Sigmoid colon (tissue), 7 donors: ENCODE measurements at regions of chr6 and their contacts with region 1.

Region 1: GRCh38 chr6:31834434-31835198 is 7.1 kb downstream of the HSPA1B start:
- DNase-seq: peak; percentile 93
- H3K4me3 ChIP-seq: peak overlapping the region; percentile 63 to 85 (median 74)
- H3K27ac ChIP-seq: peak overlapping the region; percentile 90 to 96 (median 94)
- H3K4me1 ChIP-seq: peaks cover 0 to 67% (median 59%) of the 10 kb centered on the region in 4 donors
- H3K27me3 ChIP-seq: no peaks in the 10 kb centered on the region
- CTCF ChIP-seq: no peak
- EP300 ChIP-seq: peak in 2 of 4 donors; percentile 55 to 59
- POLR2A ChIP-seq: peak; percentile 42 to 70

Region 2: DNA sequence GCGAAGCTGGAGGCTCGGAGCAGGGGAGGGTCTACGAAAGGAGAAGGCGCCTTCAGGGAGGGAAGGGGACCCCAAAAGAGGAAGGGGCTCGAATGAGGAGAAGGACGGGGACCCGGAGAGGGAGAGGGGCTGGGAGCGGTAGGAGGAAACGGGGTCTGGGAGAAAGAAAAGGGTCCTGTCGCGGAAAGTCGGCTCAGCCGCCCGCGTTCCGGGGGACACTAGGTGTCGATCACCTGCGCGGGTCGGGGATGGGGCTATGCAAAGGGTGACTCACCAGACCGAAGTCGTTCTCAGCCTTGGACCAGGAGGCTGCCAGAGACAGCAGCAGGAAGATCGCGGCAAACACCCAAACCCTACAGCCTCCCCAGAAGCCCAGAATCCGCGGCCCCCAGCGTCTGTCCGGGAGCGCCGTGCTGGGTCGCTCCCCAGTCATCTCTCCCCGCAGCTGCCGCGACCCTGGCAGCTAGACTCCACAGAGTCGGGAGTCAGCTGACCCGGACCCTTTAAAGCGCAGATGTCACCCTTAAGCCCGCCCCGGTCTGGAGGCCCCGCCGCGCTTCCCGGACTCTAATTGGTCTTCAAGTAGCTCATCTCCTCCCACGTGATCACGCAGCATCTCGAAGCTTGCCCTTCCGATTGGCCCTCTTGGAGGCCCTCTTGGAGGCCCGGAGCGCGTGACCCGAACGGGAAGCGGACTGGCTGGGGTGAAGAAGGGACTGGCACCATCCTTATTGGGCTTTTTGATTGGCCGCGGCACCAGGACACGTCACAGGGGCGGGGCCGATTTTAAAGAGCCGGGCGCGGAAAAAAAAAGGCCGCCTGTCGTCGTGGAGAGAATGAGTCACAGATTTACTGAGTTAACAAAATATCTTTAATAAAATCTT is 28.0 kb after region 1 on chr6 and contains the start of gene NEU1:
- intact Hi-C with region 1: loop called (anchors 1 kb)
- DNase-seq: peak; percentile 100
- H3K4me3 ChIP-seq: peak within 1 kb of the TSS; percentile 60 to 74 (median 68)
- H3K27ac ChIP-seq: peak within 1 kb of the TSS; percentile 84 to 89 (median 88)
- H3K4me1 ChIP-seq: peaks cover 0 to 25% (median 15%) of the 10 kb centered on the region in 4 donors
- H3K27me3 ChIP-seq: no peaks in the 10 kb centered on the region
- CTCF ChIP-seq: no peak
- EP300 ChIP-seq: peak in 2 of 4 donors; percentile 7 to 61
- POLR2A ChIP-seq: peak; percentile 97
- total RNA-seq, gene NEU1: 31.3 to 43.2 (median 33.6) TPM

Region 3: GRCh38 chr6:31958741-31959739 is 124.4 kb after region 1 on chr6 and contains the starts of genes NELFE and SKIC2:
- intact Hi-C with region 1: loop called (anchors 10 kb)
- DNase-seq: peak; percentile 99
- H3K4me3 ChIP-seq: peak within 1 kb of the TSS; percentile 65 to 92 (median 83)
- H3K27ac ChIP-seq: peak within 1 kb of the TSS; percentile 77 to 91 (median 88)
- H3K4me1 ChIP-seq: peaks cover 0 to 25% (median 22%) of the 10 kb centered on the region in 4 donors
- H3K27me3 ChIP-seq: no peaks in the 10 kb centered on the region
- CTCF ChIP-seq: no peak
- EP300 ChIP-seq: peak in 1 of 4 donors; percentile 48
- POLR2A ChIP-seq: peak; percentile 46 to 52
- total RNA-seq, gene NELFE: 60.1 to 96.9 (median 75.8) TPM
- total RNA-seq, gene SKIC2: 22.1 to 73.4 (median 33.4) TPM